ENCODE measurements at regions of chr1 and their contacts with region 1.

Region 1: DNA sequence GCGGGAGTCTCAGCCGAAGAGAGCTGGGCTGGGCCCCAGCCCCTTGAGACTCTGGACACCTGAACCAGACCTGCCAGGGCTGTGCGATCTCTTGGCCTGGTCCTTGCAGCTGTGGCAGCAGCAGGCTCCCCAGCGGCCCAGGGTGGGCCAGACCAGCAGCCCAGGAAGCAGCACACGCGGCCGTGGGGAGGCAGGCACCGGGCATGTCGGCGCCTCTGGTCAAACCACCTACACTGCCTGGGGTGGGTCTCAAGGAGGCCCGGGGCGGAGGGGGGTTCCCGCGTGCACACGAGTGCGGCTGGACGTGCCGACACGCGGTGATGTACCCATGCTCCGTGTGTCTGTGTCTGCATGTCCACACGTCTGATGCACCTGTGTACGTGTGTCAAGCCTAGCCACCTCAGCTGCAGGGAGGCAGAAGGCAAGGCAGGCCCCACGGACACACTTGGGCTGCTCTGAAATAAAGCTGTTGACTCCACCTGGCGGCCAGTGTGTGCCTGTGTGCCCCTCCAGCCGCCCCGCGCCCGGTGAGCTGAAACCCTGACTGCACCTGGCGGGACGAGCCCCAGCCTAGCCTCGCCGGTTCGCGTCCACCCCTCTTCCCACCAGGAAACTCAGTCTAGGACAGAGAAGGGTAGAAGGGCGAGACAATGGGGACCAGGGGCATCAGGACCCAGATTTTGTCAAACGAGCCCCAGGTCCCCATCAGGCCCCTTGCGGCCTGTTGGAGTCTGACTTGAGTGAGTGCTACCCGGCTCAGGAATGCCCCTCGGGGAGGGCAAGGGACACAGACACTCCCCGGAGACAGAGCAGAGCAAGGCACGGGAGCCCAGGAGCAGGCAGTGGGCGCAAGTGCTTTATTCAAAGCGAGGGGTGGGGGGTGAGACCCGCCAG is 11.6 kb downstream of the SCNN1D start:
- DNase-seq: peak; percentile 68
- ATAC-seq: peak; percentile 92
- H3K4me3 Mint-ChIP-seq: no peak overlapping the region
- H3K27ac Mint-ChIP-seq: no peak overlapping the region
- H3K4me1 Mint-ChIP-seq: peaks cover 10% of the 10 kb centered on the region
- H3K27me3 Mint-ChIP-seq: peaks cover 2% of the 10 kb centered on the region
- CTCF ChIP-seq: no peak

Region 2: GRCh38 chr1:983799-984473 is 307.9 kb before region 1 on chr1:
- CTCF ChIA-PET with region 1: interaction called, 23 read pairs
- POLR2A ChIA-PET with region 1: interaction called, 3 read pairs
- intact Hi-C with region 1: loop called (anchors 1 kb)
- DNase-seq: peak; percentile 66
- ATAC-seq: peak; percentile 95
- H3K4me3 Mint-ChIP-seq: no peak overlapping the region
- H3K27ac Mint-ChIP-seq: no peak overlapping the region
- H3K4me1 Mint-ChIP-seq: no peaks in the 10 kb centered on the region
- H3K27me3 Mint-ChIP-seq: peaks cover 23% of the 10 kb centered on the region
- CTCF ChIP-seq: peak; percentile 39

Region 3: GRCh38 chr1:1273512-1274298 is 18.1 kb before region 1 on chr1 and contains the start of gene UBE2J2:
- CTCF ChIA-PET with region 1: interaction called, 3 read pairs
- POLR2A ChIA-PET with region 1: interaction called, 6 read pairs
- intact Hi-C with region 1: loop called (anchors 1 kb)
- DNase-seq: peak; percentile 82
- ATAC-seq: peak; percentile 96
- H3K4me3 Mint-ChIP-seq: peak within 1 kb of the TSS; percentile 87
- H3K27ac Mint-ChIP-seq: peak within 1 kb of the TSS; percentile 70
- H3K4me1 Mint-ChIP-seq: peaks cover 38% of the 10 kb centered on the region
- H3K27me3 Mint-ChIP-seq: no peaks in the 10 kb centered on the region
- CTCF ChIP-seq: no peak
- total RNA-seq, gene UBE2J2: 79.2 and 89.9 TPM in 2 replicates